ENCODE measurements at regions of chr10 and their contacts with region 1.

Region 1: GRCh38 chr10:31133628-31134302 is 102.1 kb upstream of the ZNF438 start:
- DNase-seq: peak; percentile 52
- H3K4me3 Mint-ChIP-seq: peak overlapping the region; percentile 60
- H3K27ac Mint-ChIP-seq: peak overlapping the region; percentile 84
- H3K4me1 Mint-ChIP-seq: peaks cover 45% of the 10 kb centered on the region
- H3K27me3 Mint-ChIP-seq: no peaks in the 10 kb centered on the region

Region 2: DNA sequence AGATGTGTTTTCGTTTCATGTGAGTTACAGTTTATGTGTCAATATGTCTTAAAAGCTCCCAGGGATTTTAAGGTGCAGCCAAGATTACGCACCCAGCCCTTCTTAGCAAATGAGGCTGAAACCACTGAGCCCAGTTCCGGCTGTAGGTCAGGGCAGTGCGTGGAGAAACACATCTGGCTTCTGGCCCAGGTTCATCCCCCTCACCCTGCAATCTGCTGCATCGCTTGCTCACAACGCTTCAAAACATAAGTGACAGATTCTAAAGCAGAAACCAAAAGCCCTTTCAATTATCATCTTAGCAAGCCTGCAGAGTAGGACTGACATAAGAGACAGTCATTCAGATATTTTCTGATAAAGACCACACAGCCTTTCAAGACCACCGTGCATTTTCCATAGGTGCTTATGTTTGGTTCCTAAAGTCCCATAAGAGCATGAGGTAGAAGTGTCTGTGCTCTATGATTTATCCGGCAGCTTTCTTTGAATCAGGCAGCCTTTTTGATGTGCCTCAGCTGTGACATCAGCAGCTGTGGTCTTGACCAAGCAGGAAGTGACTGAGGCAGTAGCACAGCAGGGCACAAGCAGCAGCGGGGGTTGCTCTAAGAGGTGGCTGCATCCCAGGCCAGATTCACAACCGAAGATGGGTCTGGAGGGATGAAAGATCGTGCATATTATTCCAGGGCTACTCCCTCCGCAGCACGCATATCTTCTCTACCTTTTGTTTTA is 432.2 kb before region 1 on chr10:
- intact Hi-C with region 1: loop called (anchors 5 kb)
- DNase-seq: peak; percentile 77
- H3K4me3 Mint-ChIP-seq: peak overlapping the region; percentile 72
- H3K27ac Mint-ChIP-seq: peak overlapping the region; percentile 95
- H3K4me1 Mint-ChIP-seq: peaks cover 77% of the 10 kb centered on the region
- H3K27me3 Mint-ChIP-seq: no peaks in the 10 kb centered on the region

Region 3: GRCh38 chr10:31031558-31032257 is 102.1 kb before region 1 on chr10 and contains the start of gene ZNF438:
- intact Hi-C with region 1: loop called (anchors 2 kb)
- DNase-seq: peak; percentile 94
- H3K4me3 Mint-ChIP-seq: peak within 1 kb of the TSS; percentile 86
- H3K27ac Mint-ChIP-seq: peak within 1 kb of the TSS; percentile 98
- H3K4me1 Mint-ChIP-seq: peaks cover 27% of the 10 kb centered on the region
- H3K27me3 Mint-ChIP-seq: no peaks in the 10 kb centered on the region
- total RNA-seq, gene ZNF438: 5.8 and 6.1 TPM in 2 replicates

Region 4: GRCh38 chr10:31075434-31075833 is 58.3 kb before region 1 on chr10:
- intact Hi-C with region 1: no loop called
- DNase-seq: no peak
- H3K4me3 Mint-ChIP-seq: no peak overlapping the region
- H3K27ac Mint-ChIP-seq: no peak overlapping the region
- H3K4me1 Mint-ChIP-seq: peaks cover 2% of the 10 kb centered on the region
- H3K27me3 Mint-ChIP-seq: peaks cover 4% of the 10 kb centered on the region

Region 5: GRCh38 chr10:31101123-31101522 is 32.6 kb before region 1 on chr10:
- intact Hi-C with region 1: loop called (anchors 1 kb)
- DNase-seq: peak; percentile 54
- H3K4me3 Mint-ChIP-seq: no peak overlapping the region
- H3K27ac Mint-ChIP-seq: peak overlapping the region; percentile 90
- H3K4me1 Mint-ChIP-seq: peaks cover 64% of the 10 kb centered on the region
- H3K27me3 Mint-ChIP-seq: no peaks in the 10 kb centered on the region

Region 6: GRCh38 chr10:31353574-31353973 is 219.8 kb after region 1 on chr10:
- intact Hi-C with region 1: loop called (anchors 2 kb)
- DNase-seq: no peak
- H3K4me3 Mint-ChIP-seq: no peak overlapping the region
- H3K27ac Mint-ChIP-seq: peak overlapping the region; percentile 72
- H3K4me1 Mint-ChIP-seq: peaks cover 46% of the 10 kb centered on the region
- H3K27me3 Mint-ChIP-seq: no peaks in the 10 kb centered on the region

Measured in activated T-helper 2 cell treated with anti-CD3 and anti-CD28 coated beads, Interferon-gamma antibody, Interleukin-2, Interleukin-4, amounts not matched to agents 10 μg/mL and 5 μg/mL and 100 μg/mL, durations not matched to agents 14 hours and 24 hours and 36 hours (primary cell).